Activated CD4-positive, alpha-beta T cell treated with anti-CD3 and anti-CD28 coated beads for 36 hours (primary cell): ENCODE measurements at regions of chr16 and their contacts with region 1.

Region 1: DNA sequence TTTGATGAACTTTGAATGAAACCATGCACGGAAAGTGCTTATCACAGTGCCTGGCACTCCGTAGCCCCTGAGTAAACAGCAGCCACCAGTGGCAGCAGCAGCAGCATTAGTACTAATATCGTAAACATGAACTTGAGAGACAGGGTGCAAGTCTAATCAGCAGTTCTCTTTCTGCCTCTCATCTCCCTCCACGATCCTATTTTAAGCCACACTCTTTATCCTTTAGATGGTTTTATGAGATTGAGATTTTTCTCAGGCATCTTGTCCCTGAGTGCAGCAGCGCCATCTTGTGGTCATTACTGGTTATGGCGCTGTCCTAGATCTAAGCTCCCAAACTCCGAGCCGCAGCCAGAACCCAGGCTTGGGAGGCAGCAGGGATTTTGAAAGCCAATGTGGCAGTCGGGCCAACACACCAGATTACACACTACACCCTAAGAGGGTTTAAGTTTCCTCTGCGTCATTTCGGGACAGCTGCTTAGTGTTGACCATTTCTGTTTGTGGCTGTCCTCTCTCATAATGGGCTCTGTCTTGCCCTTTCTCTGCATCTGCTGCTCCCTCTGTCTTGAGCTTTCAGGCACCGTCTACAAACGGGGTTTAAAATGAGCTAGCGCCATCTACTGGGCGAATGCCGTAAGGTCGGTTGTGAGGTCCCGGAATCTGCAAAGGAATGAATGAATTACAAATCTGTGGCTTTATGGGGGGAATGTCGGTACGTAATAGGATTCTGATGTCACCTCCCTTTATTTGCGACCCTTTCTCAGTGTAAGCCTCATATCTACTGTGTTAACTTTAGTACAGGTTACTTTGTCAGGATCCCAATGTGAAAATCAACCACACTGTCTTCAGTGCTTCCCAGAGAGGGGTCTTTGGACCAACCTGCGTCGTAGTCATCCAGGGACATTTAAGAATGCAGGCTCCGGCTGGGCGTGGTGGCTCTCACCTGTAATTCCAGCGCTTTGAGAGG is 64.5 kb downstream of the CYLD start:
- DNase-seq: peak; percentile 91
- ATAC-seq: peak; percentile 94
- H3K4me3 Mint-ChIP-seq: peak overlapping the region; percentile 56
- H3K27ac Mint-ChIP-seq: peak overlapping the region; percentile 55
- H3K4me1 Mint-ChIP-seq: peaks cover 12% of the 10 kb centered on the region
- H3K27me3 Mint-ChIP-seq: no peaks in the 10 kb centered on the region

Region 2: DNA sequence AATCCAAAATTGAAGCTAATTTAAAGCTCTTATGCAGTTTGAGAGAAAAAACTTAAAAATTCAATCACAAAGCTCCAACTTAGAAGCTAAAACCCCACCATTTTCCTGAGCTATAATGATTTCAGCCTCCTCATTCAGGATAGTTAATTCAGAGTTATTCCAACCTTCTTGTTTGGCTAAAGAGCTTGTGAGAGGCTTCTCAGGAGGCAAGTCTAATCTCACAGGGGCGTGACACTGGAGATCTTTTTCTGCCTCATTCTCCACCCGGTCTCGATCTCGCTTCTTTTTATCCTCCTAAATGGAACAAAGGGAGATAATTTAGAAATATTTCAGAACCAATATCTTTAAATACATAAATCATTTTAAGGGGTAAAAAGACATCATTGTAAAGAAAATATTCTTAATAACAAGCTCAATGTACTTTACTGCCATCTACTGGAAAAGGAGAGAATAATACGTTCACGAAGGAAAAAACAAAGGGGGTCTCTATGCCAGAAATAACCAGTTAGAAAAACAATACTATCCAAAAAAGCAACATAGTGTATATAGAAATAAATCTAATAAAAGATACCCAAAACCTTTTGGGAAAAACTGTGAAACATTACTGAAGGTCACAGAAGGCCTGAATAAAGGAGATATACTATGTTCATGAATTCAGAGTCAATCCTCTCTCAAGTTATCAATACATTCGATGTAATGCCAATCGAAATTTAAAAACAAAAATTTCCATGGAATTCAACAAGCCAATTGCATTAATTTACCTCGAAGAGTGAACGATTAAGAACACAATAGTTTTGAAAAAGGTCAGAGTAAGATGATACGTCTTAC is 451.5 kb before region 1 on chr16:
- CTCF ChIA-PET with region 1: interaction called, 20 read pairs
- POLR2A ChIA-PET with region 1: no interaction called
- intact Hi-C with region 1: no loop called
- DNase-seq: no peak
- ATAC-seq: no peak
- H3K4me3 Mint-ChIP-seq: no peak overlapping the region
- H3K27ac Mint-ChIP-seq: no peak overlapping the region
- H3K4me1 Mint-ChIP-seq: peaks cover 34% of the 10 kb centered on the region
- H3K27me3 Mint-ChIP-seq: no peaks in the 10 kb centered on the region

Region 3: DNA sequence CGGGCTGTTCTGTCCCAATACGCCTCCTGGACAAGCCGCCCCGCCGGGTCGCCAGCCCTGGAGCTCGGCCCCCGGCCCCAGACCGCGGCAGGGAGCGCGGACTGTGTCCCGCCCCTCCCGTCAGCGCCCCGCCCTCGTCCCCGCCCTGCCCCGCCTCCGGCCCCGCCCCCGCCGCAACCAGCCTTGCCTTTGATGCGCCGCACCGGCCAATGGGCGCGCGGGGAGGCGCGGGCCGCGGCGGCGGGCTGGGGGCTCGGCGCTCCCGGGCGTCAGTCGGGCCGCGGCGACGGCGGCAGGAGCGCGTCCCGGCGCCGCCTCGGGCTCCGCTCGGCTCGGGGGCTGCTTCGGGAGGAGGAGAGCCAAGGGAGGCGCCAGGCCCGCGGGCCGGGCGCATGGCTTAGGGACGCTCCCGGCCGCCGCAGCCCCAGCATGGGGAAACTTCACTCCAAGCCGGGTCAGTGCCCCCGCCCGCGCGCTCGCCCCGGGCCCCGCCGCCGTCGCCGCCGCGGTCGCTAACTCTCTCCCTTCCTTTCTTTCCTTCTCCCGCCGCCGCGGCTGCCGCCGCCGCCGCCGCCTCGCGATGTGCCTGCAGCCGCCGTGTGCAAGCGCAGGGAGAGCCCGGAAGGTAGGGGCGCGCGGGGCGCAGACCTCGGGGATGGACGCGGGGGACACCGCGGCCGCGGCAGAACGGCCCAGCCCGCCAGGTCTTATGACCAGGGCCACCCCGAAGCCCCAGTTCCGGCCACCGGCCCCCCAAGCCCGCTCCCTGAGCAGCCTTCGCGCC is 258.1 kb before region 1 on chr16 and contains the start of gene NKD1:
- CTCF ChIA-PET with region 1: interaction called, 11 read pairs
- POLR2A ChIA-PET with region 1: no interaction called
- intact Hi-C with region 1: loop called in 1 of 2 experiments (anchors 1 kb)
- DNase-seq: peak; percentile 87
- ATAC-seq: peak; percentile 84
- H3K4me3 Mint-ChIP-seq: peak within 1 kb of the TSS; percentile 81
- H3K27ac Mint-ChIP-seq: no peak within 1 kb of the TSS
- H3K4me1 Mint-ChIP-seq: peaks cover 28% of the 10 kb centered on the region
- H3K27me3 Mint-ChIP-seq: no peaks in the 10 kb centered on the region
- total RNA-seq, gene NKD1: 1.8 to 3.1 TPM

Region 4: GRCh38 chr16:50671644-50672260 is 134.6 kb before region 1 on chr16:
- CTCF ChIA-PET with region 1: interaction called, 86 read pairs
- POLR2A ChIA-PET with region 1: interaction called, 3 read pairs
- intact Hi-C with region 1: loop called in 1 of 2 experiments (anchors 1 kb)
- DNase-seq: peak; percentile 80
- ATAC-seq: no peak
- H3K4me3 Mint-ChIP-seq: no peak overlapping the region
- H3K27ac Mint-ChIP-seq: peak overlapping the region; percentile 71
- H3K4me1 Mint-ChIP-seq: peaks cover 30% of the 10 kb centered on the region
- H3K27me3 Mint-ChIP-seq: no peaks in the 10 kb centered on the region

Region 5: GRCh38 chr16:50747207-50747956 is 59.0 kb before region 1 on chr16:
- CTCF ChIA-PET with region 1: interaction called, 38 read pairs
- POLR2A ChIA-PET with region 1: no interaction called
- intact Hi-C with region 1: loop called (anchors 1 to 2 kb)
- DNase-seq: no peak
- ATAC-seq: peak; percentile 74
- H3K4me3 Mint-ChIP-seq: peak overlapping the region; percentile 68
- H3K27ac Mint-ChIP-seq: peak overlapping the region; percentile 88
- H3K4me1 Mint-ChIP-seq: peaks cover 66% of the 10 kb centered on the region
- H3K27me3 Mint-ChIP-seq: no peaks in the 10 kb centered on the region

Region 6: GRCh38 chr16:50791522-50791921 is 14.9 kb before region 1 on chr16:
- CTCF ChIA-PET with region 1: interaction called, 43 read pairs
- POLR2A ChIA-PET with region 1: no interaction called
- intact Hi-C with region 1: no loop called
- DNase-seq: no peak
- ATAC-seq: no peak
- H3K4me3 Mint-ChIP-seq: no peak overlapping the region
- H3K27ac Mint-ChIP-seq: peak overlapping the region; percentile 0
- H3K4me1 Mint-ChIP-seq: peaks cover 21% of the 10 kb centered on the region
- H3K27me3 Mint-ChIP-seq: no peaks in the 10 kb centered on the region